ENCODE measurements at regions of chr11 and their contacts with region 1.

Region 1: DNA sequence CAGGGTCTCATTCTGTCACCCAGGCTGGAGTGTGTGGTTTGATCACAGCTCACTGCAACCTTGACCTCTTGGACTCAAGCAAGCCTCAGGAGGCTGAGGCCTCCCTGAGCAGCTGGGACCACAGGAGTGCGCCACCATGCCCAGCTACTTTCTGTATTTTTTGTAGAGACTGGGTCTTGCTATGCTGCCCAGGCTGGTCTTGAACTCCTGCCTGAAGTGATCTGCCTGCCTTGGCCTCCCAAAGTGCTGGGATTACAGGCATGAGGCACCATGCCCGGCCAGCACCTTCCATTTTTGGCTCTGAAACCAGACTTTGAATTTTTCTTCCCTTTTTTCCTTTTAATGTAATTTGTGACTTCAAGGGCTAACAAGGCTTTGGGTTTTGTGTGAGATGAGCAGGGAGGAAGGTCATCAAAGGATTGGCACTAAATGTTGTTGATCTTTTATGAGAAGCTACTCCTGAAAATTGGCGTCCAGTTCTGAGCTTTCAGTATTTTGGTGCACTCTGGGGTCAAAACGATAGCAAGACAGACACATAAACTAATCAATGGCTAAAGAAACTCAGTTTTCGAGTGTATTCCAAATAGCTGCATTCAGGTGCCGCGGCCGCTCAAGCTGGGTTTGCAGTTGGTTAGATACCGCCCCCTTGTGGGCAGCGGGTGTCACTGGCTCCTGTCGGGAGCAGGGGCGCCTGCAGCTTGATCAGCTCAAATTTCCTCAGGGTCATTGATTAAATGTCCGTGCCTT is 51.9 kb upstream of the CLMP start:
- DNase-seq: peak; percentile 80
- H3K4me3 ChIP-seq: peak overlapping the region in 1 of 2 experiments; percentile 46; a peak in 1 of 4 replicates
- H3K27ac ChIP-seq: no peak overlapping the region
- H3K4me1 ChIP-seq: peaks cover 7 to 14% of the 10 kb centered on the region in 2 experiments; a peak in 2 of 4 replicates
- H3K27me3 ChIP-seq: no peaks in the 10 kb centered on the region
- CTCF ChIP-seq: peak; percentile 98
- EP300 ChIP-seq: no peak
- RAD21 ChIP-seq: peak; percentile 99

Region 2: DNA sequence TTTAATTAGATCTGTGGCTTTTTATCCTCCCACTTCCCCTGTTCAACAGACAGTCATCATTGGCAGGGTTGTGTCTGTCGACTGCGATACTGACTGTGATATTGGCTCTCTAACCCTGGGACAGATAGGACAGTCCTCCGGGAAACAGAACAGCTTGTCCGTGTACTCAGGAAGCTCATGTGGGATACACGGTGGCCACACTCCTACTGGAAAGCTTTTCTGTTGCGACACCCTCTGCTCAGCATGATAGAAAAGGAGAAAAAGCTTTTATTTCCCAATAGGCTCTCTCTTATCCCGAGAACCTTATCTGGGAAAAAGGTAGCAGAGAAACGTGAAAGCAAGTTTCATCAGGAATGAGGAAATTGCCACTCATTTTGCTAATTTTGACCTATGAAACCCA is 124.6 kb before region 1 on chr11:
- CTCF ChIA-PET with region 1: interaction called, 437 read pairs
- POLR2A ChIA-PET with region 1: no interaction called
- DNase-seq: peak; percentile 48
- H3K4me3 ChIP-seq: no peak overlapping the region
- H3K27ac ChIP-seq: peak overlapping the region; percentile 66 to 77
- H3K4me1 ChIP-seq: peaks cover 9 to 28% of the 10 kb centered on the region in 2 experiments; a peak in 2 of 4 replicates
- H3K27me3 ChIP-seq: no peaks in the 10 kb centered on the region
- CTCF ChIP-seq: no peak
- EP300 ChIP-seq: no peak
- RAD21 ChIP-seq: no peak

Region 3: DNA sequence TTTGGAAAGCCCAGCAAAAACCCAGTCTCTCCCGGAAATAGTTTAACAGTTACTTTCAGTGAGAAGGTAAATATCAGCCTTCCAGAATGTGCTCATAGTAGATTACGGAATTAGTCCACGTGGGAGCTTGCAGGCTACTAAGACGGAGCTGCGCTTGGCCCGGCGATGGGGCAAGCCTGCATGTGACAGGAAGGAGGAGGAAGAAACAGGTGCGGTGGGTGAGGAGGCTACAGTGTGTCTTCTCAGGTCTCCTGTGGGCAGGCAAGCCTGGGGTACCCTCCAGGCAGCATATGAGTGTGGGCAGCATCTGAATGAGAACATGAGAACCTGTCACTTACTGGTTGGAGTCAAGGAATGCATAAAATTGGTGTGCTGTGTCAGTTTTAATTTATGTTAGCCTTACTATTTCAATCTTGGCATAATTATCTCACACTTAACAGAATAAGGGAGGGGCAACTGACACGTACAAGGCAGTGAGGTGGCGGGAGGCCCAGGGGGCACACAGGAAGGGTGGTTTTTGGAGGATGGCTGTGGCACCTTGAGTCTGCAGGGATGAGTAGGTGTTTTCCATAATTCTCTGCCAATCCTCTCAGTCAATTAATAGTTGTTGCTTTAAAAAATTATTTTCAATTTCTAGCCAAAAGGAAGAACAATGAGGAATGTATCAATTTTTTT is 87.6 kb before region 1 on chr11:
- CTCF ChIA-PET with region 1: interaction called, 24 read pairs
- POLR2A ChIA-PET with region 1: no interaction called
- DNase-seq: no peak
- H3K4me3 ChIP-seq: no peak overlapping the region
- H3K27ac ChIP-seq: peak overlapping the region; percentile 6 to 46; a peak in 2 of 4 replicates
- H3K4me1 ChIP-seq: peaks cover 27 to 39% of the 10 kb centered on the region in 2 experiments; a peak in 3 of 4 replicates
- H3K27me3 ChIP-seq: no peaks in the 10 kb centered on the region
- CTCF ChIP-seq: no peak
- EP300 ChIP-seq: no peak
- RAD21 ChIP-seq: no peak

Region 4: GRCh38 chr11:123195188-123196059 is 51.5 kb before region 1 on chr11 and contains the start of gene CLMP:
- CTCF ChIA-PET with region 1: interaction called, 16 read pairs
- POLR2A ChIA-PET with region 1: interaction called, 9 read pairs
- DNase-seq: peak; percentile 91
- H3K4me3 ChIP-seq: peak within 1 kb of the TSS; percentile 72 to 85
- H3K27ac ChIP-seq: peak within 1 kb of the TSS; percentile 81 to 97
- H3K4me1 ChIP-seq: peaks cover 34 to 37% of the 10 kb centered on the region in 2 experiments
- H3K27me3 ChIP-seq: no peaks in the 10 kb centered on the region
- CTCF ChIP-seq: no peak
- EP300 ChIP-seq: peak; percentile 0 to 43; a peak in 1 of 4 replicates
- RAD21 ChIP-seq: no peak
- polyA plus RNA-seq, gene CLMP: 61.9 and 85.1 TPM in 2 replicates

Region 5: DNA sequence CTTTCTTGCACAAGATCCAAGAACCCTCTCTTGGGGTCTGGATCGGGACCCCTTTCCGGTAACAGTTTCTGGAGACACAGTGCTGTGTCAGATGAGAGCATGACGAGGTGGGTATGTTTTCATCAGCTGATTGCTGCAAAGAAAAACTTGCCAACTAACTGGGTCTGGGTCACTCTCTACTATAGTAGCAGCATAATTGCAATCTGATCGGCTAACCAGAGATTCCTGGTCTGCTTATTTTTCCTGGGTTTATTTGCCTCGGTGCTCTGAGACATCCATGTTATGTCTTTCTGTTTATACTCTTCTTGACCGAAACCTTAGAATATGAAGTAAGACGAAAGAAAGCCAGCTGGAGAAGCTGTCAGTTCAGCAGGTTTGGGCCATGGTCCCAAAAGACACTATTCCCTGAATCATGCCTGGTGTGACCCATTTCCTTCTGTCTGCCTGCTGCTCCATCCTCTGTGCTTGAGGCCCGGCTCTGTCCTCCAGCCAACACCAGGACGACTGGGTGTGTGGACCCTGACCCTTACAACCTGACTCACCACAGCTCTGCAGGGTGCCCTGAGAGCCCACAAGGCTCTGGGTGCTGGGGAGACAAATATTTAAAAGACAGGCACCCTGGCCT is 27.7 kb before region 1 on chr11:
- CTCF ChIA-PET with region 1: interaction called, 12 read pairs
- POLR2A ChIA-PET with region 1: no interaction called
- DNase-seq: no peak
- H3K4me3 ChIP-seq: no peak overlapping the region
- H3K27ac ChIP-seq: peak overlapping the region in 1 of 2 experiments; percentile 49; a peak in 2 of 4 replicates
- H3K4me1 ChIP-seq: peaks cover 0 to 17% of the 10 kb centered on the region in 2 experiments; a peak in 2 of 4 replicates
- H3K27me3 ChIP-seq: no peaks in the 10 kb centered on the region
- CTCF ChIP-seq: no peak
- EP300 ChIP-seq: no peak
- RAD21 ChIP-seq: no peak

Region 6: DNA sequence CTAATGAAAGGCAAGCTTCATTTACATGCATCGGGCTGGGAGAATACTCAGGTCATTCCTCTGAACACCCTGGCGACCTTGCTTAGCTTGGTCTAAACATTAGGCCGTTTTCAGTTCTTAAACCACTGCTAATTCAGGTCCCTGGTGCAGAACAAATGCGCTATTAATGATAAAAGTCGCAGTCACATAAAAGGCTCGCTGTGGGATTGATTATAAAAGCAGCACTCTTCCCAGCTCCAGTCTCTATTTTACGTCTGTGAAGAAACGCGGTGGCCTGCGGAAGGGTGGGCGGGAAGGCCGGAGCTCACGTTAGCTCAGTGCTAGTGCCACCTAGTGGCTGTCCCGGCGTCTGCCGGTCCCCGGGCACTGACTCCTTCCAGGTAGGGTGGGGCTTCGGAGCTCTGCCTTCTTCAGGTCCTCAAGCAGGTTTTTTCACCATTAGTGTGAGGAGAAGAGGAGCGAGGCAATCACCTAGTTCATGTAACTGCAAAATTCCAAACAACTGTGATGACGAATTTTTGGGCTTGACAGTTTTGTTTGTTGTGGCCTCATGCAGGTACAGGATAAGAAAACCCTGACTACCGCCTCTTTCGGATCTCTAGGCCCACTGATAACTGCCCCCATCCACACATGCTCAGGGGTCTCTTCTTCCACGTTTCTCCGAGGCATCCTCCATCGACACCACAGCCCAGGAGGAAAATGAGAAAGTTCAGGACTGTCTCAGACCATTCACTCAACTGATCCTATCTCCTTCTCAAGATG is 14.6 kb after region 1 on chr11:
- CTCF ChIA-PET with region 1: interaction called, 126 read pairs
- POLR2A ChIA-PET with region 1: no interaction called
- DNase-seq: peak; percentile 85
- H3K4me3 ChIP-seq: peak overlapping the region in 1 of 2 experiments; percentile 24; a peak in 2 of 4 replicates
- H3K27ac ChIP-seq: no peak overlapping the region
- H3K4me1 ChIP-seq: peaks cover 6 to 18% of the 10 kb centered on the region in 2 experiments; a peak in 2 of 4 replicates
- H3K27me3 ChIP-seq: no peaks in the 10 kb centered on the region
- CTCF ChIP-seq: peak; percentile 96
- EP300 ChIP-seq: no peak
- RAD21 ChIP-seq: peak; percentile 84

Measured in SK-N-SH (cell line).